ENCODE measurements at regions of chr7 and their contacts with region 1.

Region 1: DNA sequence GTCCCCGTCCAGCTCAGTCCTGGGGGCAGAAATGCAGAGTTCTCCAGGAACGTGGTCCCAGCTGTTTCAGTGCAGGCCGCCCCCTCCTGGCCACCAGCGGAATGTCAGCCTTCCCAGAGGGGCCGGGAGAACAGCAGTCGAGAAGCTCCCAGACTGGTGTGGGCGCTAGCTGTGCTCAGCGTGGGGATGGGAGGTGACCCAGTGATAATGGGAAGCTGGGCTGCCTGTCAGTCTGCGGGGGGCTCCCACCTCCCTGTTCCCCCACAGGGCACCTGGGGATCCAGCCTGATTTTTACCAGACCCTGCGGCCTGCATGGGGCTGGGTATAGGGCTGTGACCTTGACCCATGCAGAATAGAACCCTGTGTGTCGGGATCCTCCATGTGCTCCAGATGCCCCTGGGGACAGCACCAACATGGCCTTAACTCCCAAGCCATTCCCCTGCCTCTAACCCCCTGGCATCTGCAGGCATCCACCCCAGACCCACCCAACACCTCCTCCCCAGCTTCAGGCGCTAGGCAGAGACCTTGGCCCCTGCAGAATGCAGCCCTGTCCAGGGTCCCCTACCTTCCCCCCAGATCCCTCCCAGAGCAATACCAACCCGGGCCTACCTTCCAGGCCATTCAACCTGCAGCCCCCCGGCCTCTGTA is 946 bp upstream of the ELN start:
- DNase-seq: peak; percentile 76
- H3K4me3 Mint-ChIP-seq: no peak overlapping the region
- H3K27ac Mint-ChIP-seq: no peak overlapping the region
- H3K4me1 Mint-ChIP-seq: peaks cover 14% of the 10 kb centered on the region
- H3K27me3 Mint-ChIP-seq: peaks cover 55% of the 10 kb centered on the region

Region 2: DNA sequence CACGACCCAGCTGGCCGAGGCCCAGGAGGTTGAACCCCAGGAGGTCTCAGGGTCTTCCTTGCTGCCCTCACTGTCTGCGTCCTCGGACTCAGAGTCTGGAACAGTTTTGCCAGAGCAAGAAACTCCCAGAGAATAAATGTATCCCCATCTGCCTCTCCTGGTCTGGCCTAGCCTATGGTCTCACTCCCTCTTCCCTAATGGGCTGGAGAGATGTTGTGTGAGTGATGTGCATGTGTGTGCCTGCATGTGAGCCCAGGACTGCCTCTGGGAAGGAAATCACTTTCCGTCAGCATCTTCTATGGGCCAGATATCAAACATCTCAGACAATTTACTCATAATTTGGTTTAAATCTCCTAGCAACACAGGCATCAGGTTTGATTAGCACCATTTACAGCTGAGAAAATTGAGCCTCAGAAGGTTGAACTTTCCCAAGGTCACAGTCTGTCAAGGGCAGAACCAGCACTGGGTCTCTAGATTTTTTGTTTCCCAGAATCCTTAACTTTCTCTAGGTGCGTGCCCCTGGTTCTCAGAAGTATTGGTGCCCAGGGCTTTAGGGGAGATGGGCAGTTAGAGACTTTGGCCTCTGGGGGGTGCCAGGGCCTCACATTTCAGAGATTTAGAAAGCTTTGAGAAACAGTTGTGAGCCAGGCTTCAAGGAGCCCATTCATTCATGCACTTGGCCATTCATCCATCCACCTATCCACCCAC is 161.1 kb before region 1 on chr7:
- CTCF ChIA-PET with region 1: interaction called, 3 read pairs
- intact Hi-C with region 1: loop called (anchors 1 kb)
- DNase-seq: peak; percentile 31
- H3K4me3 Mint-ChIP-seq: no peak overlapping the region
- H3K27ac Mint-ChIP-seq: no peak overlapping the region
- H3K4me1 Mint-ChIP-seq: no peaks in the 10 kb centered on the region
- H3K27me3 Mint-ChIP-seq: no peaks in the 10 kb centered on the region

Region 3: GRCh38 chr7:74037600-74037999 is 10.6 kb after region 1 on chr7:
- CTCF ChIA-PET with region 1: interaction called, 11 read pairs
- intact Hi-C with region 1: no loop called
- DNase-seq: no peak
- H3K4me3 Mint-ChIP-seq: no peak overlapping the region
- H3K27ac Mint-ChIP-seq: no peak overlapping the region
- H3K4me1 Mint-ChIP-seq: no peaks in the 10 kb centered on the region
- H3K27me3 Mint-ChIP-seq: no peaks in the 10 kb centered on the region

Region 4: GRCh38 chr7:74155792-74156395 is 128.9 kb after region 1 on chr7:
- CTCF ChIA-PET with region 1: no interaction called
- intact Hi-C with region 1: no loop called
- DNase-seq: no peak
- H3K4me3 Mint-ChIP-seq: no peak overlapping the region
- H3K27ac Mint-ChIP-seq: no peak overlapping the region
- H3K4me1 Mint-ChIP-seq: no peaks in the 10 kb centered on the region
- H3K27me3 Mint-ChIP-seq: no peaks in the 10 kb centered on the region

Region 5: GRCh38 chr7:74183613-74184450 is 156.8 kb after region 1 on chr7:
- CTCF ChIA-PET with region 1: no interaction called
- intact Hi-C with region 1: no loop called
- DNase-seq: peak; percentile 52
- H3K4me3 Mint-ChIP-seq: no peak overlapping the region
- H3K27ac Mint-ChIP-seq: peak overlapping the region; percentile 61
- H3K4me1 Mint-ChIP-seq: peaks cover 85% of the 10 kb centered on the region
- H3K27me3 Mint-ChIP-seq: no peaks in the 10 kb centered on the region

Measured in activated naive CD4-positive, alpha-beta T cell treated with anti-CD3 and anti-CD28 coated beads for 36 hours (primary cell).